HepG2 (cell line): ENCODE measurements at regions of chr5 and their contacts with region 1.

Region 1: DNA sequence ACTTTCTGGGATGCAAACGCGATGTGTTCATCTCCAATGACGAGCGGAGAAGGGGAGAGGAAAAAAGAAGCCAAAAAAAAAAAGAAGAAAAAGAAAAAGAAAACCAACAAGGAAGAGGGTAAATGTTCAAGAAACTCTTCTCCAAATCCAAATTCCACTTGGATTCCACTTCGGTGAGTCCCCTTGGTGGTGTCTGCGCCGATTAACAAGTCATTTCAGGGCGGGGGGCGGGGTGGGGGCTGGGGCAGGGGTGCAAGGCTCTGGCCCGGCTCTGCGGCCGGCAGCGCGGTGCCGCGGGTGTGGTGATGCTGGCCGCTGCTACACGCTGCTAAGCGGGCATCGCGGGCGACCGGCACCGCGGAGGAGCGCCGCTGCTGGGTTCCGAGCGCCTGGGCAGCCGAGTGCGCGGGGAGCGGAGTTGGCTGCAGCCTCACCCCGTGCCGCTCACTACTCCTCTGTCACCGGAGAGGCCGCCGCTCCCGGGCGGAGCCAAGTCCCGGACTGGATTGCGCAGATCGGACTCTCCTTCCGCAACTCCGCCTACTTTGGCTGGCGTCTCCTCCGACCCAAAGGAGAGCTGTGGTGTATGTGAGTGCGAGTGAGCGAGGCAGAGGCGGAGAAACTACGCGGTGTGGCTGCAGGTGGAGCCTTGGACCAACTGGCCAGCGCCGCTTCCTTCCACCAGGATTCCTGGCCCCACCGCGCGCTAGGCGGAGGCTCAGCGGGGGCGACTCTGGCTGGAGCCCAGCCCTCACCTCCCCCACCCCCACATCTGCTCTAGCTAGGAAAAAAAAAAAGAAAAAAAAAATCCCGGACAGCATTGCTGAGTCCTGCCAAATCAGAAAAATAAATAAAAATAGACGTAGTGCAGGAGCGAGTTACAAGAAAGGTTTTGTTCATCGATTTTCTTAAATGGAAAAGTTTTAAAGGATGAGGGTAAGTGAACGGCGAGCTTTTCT is at the start of gene SEMA6A:
- DNase-seq: peak; percentile 61
- ATAC-seq: peak; percentile 68
- H3K4me3 ChIP-seq: peak within 1 kb of the TSS; percentile 58 to 75 (median 63); a peak in 5 of 6 replicates
- H3K27ac ChIP-seq: peak within 1 kb of the TSS; percentile 62
- H3K4me1 ChIP-seq: peaks cover 41% of the 10 kb centered on the region
- H3K27me3 ChIP-seq: peaks cover 1 to 9% of the 10 kb centered on the region in 2 experiments; a peak in 1 of 5 replicates
- CTCF ChIP-seq: peak; percentile 34
- EP300 ChIP-seq: no peak
- POLR2A ChIP-seq: peak; percentile 44 to 63; a peak in 3 of 4 replicates
- RAD21 ChIP-seq: no peak
- total RNA-seq, gene SEMA6A: 2.9 and 5.1 TPM in 2 replicates

Region 2: GRCh38 chr5:116137544-116138378 is 436.9 kb before region 1 on chr5:
- CTCF ChIA-PET with region 1: no interaction called
- POLR2A ChIA-PET with region 1: no interaction called
- in situ Hi-C with region 1: no loop called
- intact Hi-C with region 1: loop called (anchors 5 kb)
- DNase-seq: peak; percentile 46
- ATAC-seq: peak; percentile 56; the same call in 2 of the 3 replicates
- H3K4me3 ChIP-seq: no peak overlapping the region
- H3K27ac ChIP-seq: no peak overlapping the region
- H3K4me1 ChIP-seq: no peaks in the 10 kb centered on the region
- H3K27me3 ChIP-seq: no peaks in the 10 kb centered on the region
- CTCF ChIP-seq: peak; percentile 73
- EP300 ChIP-seq: no peak
- POLR2A ChIP-seq: no peak
- RAD21 ChIP-seq: 0 out of 2 replicates have a peak, but pooled peaks have one; percentile 51

Region 3: GRCh38 chr5:116536284-116537083 is 38.2 kb before region 1 on chr5:
- CTCF ChIA-PET with region 1: no interaction called
- POLR2A ChIA-PET with region 1: no interaction called
- in situ Hi-C with region 1: no loop called
- intact Hi-C with region 1: loop called (anchors 5 kb)
- DNase-seq: peak; percentile 94
- ATAC-seq: peak; percentile 77
- H3K4me3 ChIP-seq: peak overlapping the region; percentile 12 to 61 (median 35); a peak in 4 of 6 replicates
- H3K27ac ChIP-seq: peak overlapping the region; percentile 71
- H3K4me1 ChIP-seq: peaks cover 67% of the 10 kb centered on the region
- H3K27me3 ChIP-seq: no peaks in the 10 kb centered on the region
- CTCF ChIP-seq: no peak
- EP300 ChIP-seq: peak; percentile 32 to 73; a peak in 2 of 4 replicates
- POLR2A ChIP-seq: no peak
- RAD21 ChIP-seq: no peak

Region 4: GRCh38 chr5:116645627-116646026 is 71.0 kb after region 1 on chr5:
- CTCF ChIA-PET with region 1: no interaction called
- POLR2A ChIA-PET with region 1: no interaction called
- in situ Hi-C with region 1: no loop called
- intact Hi-C with region 1: loop called (anchors 5 kb)
- DNase-seq: no peak
- ATAC-seq: no peak
- H3K4me3 ChIP-seq: no peak overlapping the region
- H3K27ac ChIP-seq: no peak overlapping the region
- H3K4me1 ChIP-seq: peaks cover 27% of the 10 kb centered on the region
- H3K27me3 ChIP-seq: no peaks in the 10 kb centered on the region; a peak in 1 of 5 replicates
- CTCF ChIP-seq: no peak
- EP300 ChIP-seq: no peak
- POLR2A ChIP-seq: no peak
- RAD21 ChIP-seq: no peak

Region 5: DNA sequence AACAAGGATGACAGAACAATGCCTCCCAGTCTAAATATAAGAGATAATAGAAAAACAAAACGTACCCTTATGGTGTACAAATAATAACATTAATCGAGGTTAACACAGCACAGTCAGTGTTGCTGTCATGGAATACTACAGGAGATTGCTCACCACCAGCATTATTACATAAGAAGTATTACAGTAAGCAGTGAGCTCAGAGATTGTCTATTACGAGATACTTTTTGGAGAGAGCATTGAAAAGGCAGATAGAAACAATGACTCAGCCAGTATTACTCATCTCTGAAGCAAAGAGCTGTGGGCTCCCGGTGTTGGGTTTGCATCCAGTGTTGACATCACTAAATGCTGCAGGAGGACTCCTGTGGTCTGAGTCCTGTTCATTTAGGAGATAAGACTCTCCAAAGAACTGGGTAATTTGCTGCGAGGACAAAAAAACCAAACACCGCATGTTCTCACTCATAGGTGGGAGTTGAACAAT is 191.9 kb after region 1 on chr5:
- CTCF ChIA-PET with region 1: no interaction called
- POLR2A ChIA-PET with region 1: no interaction called
- in situ Hi-C with region 1: no loop called
- intact Hi-C with region 1: loop called (anchors 10 kb)
- DNase-seq: peak; percentile 86
- ATAC-seq: peak; percentile 67
- H3K4me3 ChIP-seq: peak overlapping the region in 1 of 3 experiments; percentile 23; a peak in 1 of 6 replicates
- H3K27ac ChIP-seq: no peak overlapping the region
- H3K4me1 ChIP-seq: peaks cover 81% of the 10 kb centered on the region
- H3K27me3 ChIP-seq: no peaks in the 10 kb centered on the region
- CTCF ChIP-seq: no peak
- EP300 ChIP-seq: peak in 1 of 2 experiments; percentile 56; a peak in 1 of 4 replicates
- POLR2A ChIP-seq: no peak
- RAD21 ChIP-seq: no peak

Region 6: DNA sequence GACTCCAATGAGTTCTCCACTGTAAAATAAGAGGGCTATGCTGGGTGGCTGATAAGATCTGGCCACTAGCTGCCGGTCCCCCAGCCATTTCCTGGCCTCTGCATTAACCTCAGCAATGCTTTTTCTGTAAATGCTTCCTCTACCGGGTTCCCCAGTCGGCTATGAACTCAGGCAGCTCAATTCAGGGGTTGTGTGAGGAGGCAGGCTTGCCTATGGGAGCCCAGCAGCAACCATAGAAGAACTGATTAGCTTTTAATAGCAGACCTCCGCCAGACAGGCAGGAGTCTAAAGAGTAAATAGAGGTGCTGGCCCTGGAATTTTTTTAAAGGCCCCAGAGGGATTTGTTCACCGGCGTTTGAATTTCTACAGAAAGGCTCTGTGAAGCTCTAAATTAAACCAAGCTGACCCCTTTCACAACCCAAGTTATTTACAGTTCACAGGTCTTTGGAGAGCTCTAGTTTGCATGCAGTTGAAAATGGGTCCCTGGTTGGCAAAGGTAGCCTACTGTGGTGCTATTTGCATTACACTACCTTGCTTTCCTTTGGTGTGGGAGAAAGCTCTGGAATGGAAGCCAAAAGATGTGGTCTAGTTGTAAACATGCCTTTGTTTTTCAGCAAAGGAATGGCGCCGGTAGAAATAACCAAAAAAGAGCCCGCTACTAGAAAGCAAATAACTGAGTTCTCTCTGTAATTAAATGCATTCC is 289.6 kb after region 1 on chr5:
- CTCF ChIA-PET with region 1: no interaction called
- POLR2A ChIA-PET with region 1: interaction called, 3 read pairs
- in situ Hi-C with region 1: loop called (anchors 5 kb)
- intact Hi-C with region 1: loop called (anchors 1 kb)
- DNase-seq: peak; percentile 99
- ATAC-seq: peak; percentile 90
- H3K4me3 ChIP-seq: peak overlapping the region in 2 of 3 experiments; percentile 23 to 42; a peak in 3 of 6 replicates
- H3K27ac ChIP-seq: peak overlapping the region; percentile 99
- H3K4me1 ChIP-seq: peaks cover 76% of the 10 kb centered on the region
- H3K27me3 ChIP-seq: no peaks in the 10 kb centered on the region
- CTCF ChIP-seq: peak; percentile 14; the same call in 1 of the 2 replicates
- EP300 ChIP-seq: peak; percentile 84 to 95; a peak in 3 of 4 replicates
- POLR2A ChIP-seq: peak in 1 of 2 experiments; percentile 60; a peak in 2 of 4 replicates
- RAD21 ChIP-seq: peak; percentile 16; the same call in 1 of the 2 replicates

Region 7: GRCh38 chr5:116947691-116948528 is 373.3 kb after region 1 on chr5:
- CTCF ChIA-PET with region 1: interaction called, 17 read pairs
- POLR2A ChIA-PET with region 1: no interaction called
- in situ Hi-C with region 1: loop called (anchors 5 kb)
- intact Hi-C with region 1: loop called (anchors 1 kb)
- DNase-seq: peak; percentile 76
- ATAC-seq: peak; percentile 100
- H3K4me3 ChIP-seq: no peak overlapping the region; a peak in 1 of 6 replicates
- H3K27ac ChIP-seq: no peak overlapping the region
- H3K4me1 ChIP-seq: peaks cover 6% of the 10 kb centered on the region
- H3K27me3 ChIP-seq: no peaks in the 10 kb centered on the region
- CTCF ChIP-seq: peak; percentile 93
- EP300 ChIP-seq: no peak
- POLR2A ChIP-seq: no peak
- RAD21 ChIP-seq: peak; percentile 89